ENCODE measurements at regions of chr2 and their contacts with region 1.

Region 1: DNA sequence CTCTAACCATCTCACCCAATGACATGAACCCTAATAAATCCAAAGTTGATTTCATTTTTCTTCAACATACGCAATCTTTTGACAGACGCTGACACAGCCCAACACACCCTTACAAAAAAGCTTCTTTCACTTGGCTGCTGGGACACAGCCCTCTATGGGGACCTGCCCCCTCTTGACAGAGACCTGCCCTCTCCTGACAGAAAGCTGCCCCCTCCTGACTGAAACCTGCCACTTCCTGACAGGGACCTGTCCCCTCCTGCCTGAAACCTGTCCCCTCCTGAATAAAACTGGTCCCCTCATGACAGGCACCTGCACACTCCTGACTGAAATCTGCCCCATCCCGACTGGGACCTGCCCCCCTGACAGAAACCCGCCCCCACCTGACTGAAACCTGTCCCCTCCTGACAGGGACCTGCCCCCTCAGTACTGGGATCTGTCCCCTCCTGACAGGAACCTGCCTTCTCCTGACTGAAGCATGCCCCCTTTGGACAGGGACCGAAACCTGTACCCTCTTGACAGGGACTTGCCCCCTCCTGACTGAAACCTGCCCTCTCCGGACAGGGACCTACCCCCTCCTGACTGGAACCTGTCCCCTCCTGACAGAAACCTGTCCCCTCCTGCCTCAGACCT is 87.9 kb downstream of the PXDN start:
- DNase-seq: no peak
- H3K4me3 ChIP-seq: no peak overlapping the region
- CTCF ChIP-seq: no peak

Region 2: DNA sequence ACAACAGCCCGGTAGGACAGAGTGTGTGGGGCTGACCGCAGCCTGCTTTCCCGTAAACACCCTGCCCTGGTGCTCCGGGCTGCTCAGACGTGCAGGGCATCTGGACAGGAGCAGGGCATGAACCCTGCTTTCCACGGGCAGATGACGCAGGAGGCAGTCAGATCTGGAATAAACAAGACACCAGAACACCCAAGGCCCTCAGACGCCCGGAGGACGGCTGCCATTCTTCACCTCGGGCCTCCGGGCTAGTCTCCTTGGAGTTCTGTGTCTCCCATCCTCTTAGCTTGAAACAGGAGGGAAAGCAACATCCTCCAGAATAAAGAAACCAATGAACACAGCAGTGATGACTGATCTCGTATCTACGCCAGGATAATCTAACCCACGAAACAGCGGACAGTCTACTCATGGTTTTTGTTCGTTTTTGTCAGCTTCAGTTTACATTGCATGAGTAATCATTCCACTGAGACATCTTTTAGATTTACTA is 80.6 kb after region 1 on chr2:
- in situ Hi-C with region 1: loop called (anchors 5 kb)
- DNase-seq: no peak
- H3K4me3 ChIP-seq: no peak overlapping the region
- CTCF ChIP-seq: no peak

Measured in astrocyte of the cerebellum (primary cell).